ENCODE measurements at regions of chr1 and their contacts with region 1.

Region 1: GRCh38 chr1:171313835-171314320 is at the start of gene FMO4:
- DNase-seq: peak; percentile 51 to 90 (median 88)
- H3K4me3 ChIP-seq: peak within 1 kb of the TSS; percentile 29
- H3K4me3 Mint-ChIP-seq: peak within 1 kb of the TSS; percentile 70 to 88 (median 74)
- H3K27ac ChIP-seq: no peak within 1 kb of the TSS
- H3K27ac Mint-ChIP-seq: peak within 1 kb of the TSS; percentile 69 to 92 (median 90)
- H3K4me1 ChIP-seq: peaks cover 8% of the 10 kb centered on the region
- H3K4me1 Mint-ChIP-seq: peaks cover 12 to 25% (median 16%) of the 10 kb centered on the region in 3 donors
- H3K27me3 ChIP-seq: no peaks in the 10 kb centered on the region
- H3K27me3 Mint-ChIP-seq: peaks cover 0 to 3% of the 10 kb centered on the region in 2 donors
- total RNA-seq, gene FMO4: 0.89 to 1.7 TPM

Region 2: DNA sequence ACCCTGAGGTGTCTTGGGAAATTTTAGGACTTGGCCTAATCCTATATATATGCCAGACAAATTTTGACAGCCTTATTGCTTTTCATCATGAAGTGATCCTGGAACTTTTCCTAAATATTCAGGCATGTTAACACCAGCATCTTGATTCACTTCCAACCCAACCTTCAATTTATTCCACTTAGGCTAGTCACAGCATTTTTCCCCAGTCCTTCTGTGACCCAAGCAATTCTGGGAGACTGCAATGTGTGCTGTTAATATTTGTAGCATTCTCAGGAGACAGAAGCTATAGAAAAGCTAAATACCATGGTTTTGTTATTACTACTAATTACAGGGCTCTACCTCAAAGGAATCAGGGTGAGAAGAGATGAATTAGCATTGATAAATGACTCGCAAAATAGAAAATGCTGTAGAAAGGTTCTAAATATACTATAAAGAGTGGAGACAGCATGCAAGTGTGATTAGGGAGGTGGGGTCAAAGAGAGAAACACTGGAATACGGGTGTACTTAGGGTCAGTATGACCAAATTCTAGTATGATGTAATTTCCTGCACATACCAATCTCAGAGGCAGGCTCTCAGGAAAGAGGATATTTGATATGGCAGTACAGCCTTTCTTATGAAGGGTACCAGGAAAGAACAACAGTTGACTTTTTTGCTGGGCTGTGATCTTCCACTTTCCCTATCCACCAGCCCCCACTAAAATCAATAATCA is 620.9 kb before region 1 on chr1:
- CTCF ChIA-PET with region 1: interaction called, 11 read pairs
- POLR2A ChIA-PET with region 1: interaction called, 4 read pairs
- DNase-seq: no peak
- H3K4me3 ChIP-seq: no peak overlapping the region
- H3K4me3 Mint-ChIP-seq: no peak overlapping the region
- H3K27ac ChIP-seq: no peak overlapping the region
- H3K27ac Mint-ChIP-seq: no peak overlapping the region
- H3K4me1 ChIP-seq: no peaks in the 10 kb centered on the region
- H3K4me1 Mint-ChIP-seq: peaks cover 0 to 7% (median 0%) of the 10 kb centered on the region in 3 donors
- H3K27me3 ChIP-seq: no peaks in the 10 kb centered on the region
- H3K27me3 Mint-ChIP-seq: peaks cover 1 to 29% of the 10 kb centered on the region in 2 donors

Region 3: DNA sequence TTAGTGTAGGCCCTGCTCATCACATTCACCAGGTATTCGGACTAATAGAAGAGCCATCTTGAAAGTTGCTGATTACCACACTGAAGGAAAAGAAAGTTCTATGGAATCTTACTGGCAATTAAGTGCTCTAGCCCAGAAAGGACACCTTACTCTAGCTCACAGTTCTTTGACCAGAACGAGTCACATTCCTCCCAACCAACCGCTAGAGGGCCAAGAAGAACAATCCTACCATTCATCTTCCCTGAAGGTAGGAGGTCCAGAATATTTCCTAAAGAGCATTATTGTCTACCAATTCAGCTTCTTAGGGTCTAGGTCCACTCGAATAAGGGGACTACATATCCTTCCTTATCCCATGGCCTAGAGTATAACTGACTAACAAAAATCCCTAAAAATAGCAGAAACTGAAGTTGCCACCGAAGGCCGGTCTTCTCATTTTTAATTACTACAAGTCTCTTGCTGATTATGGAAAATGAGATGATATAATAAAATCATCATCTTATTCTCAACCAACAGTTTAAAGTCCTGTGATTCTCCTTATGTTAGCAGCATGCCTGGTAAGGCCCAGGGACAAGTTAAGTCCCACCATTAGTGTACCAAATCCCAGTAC is 68.3 kb before region 1 on chr1:
- CTCF ChIA-PET with region 1: interaction called, 28 read pairs
- POLR2A ChIA-PET with region 1: interaction called, 4 read pairs
- DNase-seq: no peak
- H3K4me3 ChIP-seq: no peak overlapping the region
- H3K4me3 Mint-ChIP-seq: no peak overlapping the region
- H3K27ac ChIP-seq: no peak overlapping the region
- H3K27ac Mint-ChIP-seq: no peak overlapping the region
- H3K4me1 ChIP-seq: no peaks in the 10 kb centered on the region
- H3K4me1 Mint-ChIP-seq: no peaks in the 10 kb centered on the region
- H3K27me3 ChIP-seq: peaks cover 5% of the 10 kb centered on the region
- H3K27me3 Mint-ChIP-seq: peaks cover 7 to 44% of the 10 kb centered on the region in 2 donors

Region 4: DNA sequence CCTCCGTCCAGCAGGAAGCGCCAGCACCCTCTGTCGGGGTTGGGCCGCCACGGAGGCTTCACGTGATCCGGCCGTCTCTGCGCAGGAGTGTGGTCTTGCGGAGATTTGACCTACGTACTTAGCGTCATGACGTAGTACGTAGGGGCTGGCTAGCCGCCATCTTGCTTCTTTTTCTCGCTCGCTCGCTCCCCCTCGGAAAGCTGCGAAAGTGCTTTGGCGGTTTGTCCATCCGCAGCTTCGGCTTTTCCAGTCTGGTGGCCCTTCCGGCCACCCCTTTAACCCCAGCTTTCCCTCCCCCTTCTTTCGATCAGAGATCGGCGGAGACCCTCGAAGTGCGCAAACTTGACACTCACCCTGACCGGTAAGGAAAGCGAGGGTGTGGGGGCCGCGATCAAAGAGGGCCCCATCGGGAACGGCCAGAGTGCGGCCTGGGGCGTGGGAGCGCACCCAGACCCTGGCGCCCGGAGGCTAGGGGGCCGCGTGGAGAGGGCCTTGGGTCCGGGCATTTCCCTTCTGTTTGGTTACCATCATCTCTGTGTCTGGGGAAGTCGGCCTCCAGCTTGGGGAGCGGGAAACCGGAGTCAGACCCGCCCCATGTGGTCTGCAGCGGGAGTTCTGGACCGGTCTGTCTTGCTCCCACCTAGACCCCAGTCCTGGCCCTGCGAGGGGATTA is 171.6 kb after region 1 on chr1 and contains the start of gene PRRC2C:
- CTCF ChIA-PET with region 1: interaction called, 10 read pairs
- POLR2A ChIA-PET with region 1: interaction called, 4 read pairs
- DNase-seq: peak; percentile 90 to 97 (median 93)
- H3K4me3 ChIP-seq: peak within 1 kb of the TSS; percentile 98
- H3K4me3 Mint-ChIP-seq: peak within 1 kb of the TSS; percentile 88 to 99 (median 93)
- H3K27ac ChIP-seq: peak within 1 kb of the TSS; percentile 100
- H3K27ac Mint-ChIP-seq: peak within 1 kb of the TSS; percentile 95 to 100 (median 98)
- H3K4me1 ChIP-seq: peaks cover 51% of the 10 kb centered on the region
- H3K4me1 Mint-ChIP-seq: peaks cover 48 to 53% (median 50%) of the 10 kb centered on the region in 3 donors
- H3K27me3 ChIP-seq: no peaks in the 10 kb centered on the region
- H3K27me3 Mint-ChIP-seq: peaks cover 0 to 6% of the 10 kb centered on the region in 2 donors
- total RNA-seq, gene PRRC2C: 262 to 275 TPM

Measured in CD8-positive, alpha-beta memory T cell (primary cell).